MCF 10A (cell line): ENCODE measurements at regions of chr15 and their contacts with region 1.

Region 1: DNA sequence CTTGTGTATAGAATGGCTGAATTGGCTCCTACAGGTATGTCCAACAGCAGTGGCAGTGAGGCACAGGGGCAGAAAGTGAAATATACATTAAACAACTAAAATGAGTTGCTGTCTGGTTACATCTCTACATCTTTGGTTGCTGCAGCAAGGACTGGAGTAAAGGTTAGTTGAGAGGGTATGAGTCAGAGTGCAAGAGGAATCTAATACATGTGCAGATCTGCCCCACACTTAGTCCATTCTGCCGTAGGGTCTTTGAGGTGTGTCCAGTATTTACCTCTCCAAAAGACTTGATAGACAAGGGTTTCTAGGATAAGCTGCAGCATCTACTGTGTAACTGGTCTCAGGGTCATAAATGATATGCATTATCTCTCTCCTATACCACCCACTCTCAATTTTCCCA is 6.2 kb upstream of the NEDD4 start:
- DNase-seq: peak; percentile 80
- H3K4me3 Mint-ChIP-seq: no peak overlapping the region
- H3K27ac Mint-ChIP-seq: peak overlapping the region; percentile 24
- H3K4me1 Mint-ChIP-seq: peaks cover 53% of the 10 kb centered on the region
- H3K27me3 Mint-ChIP-seq: no peaks in the 10 kb centered on the region
- CTCF ChIP-seq: no peak

Region 2: GRCh38 chr15:55907797-55908196 is 91.8 kb before region 1 on chr15:
- CTCF ChIA-PET with region 1: no interaction called
- POLR2A ChIA-PET with region 1: interaction called, 22 read pairs
- intact Hi-C with region 1: no loop called
- DNase-seq: peak; percentile 81
- H3K4me3 Mint-ChIP-seq: no peak overlapping the region
- H3K27ac Mint-ChIP-seq: peak overlapping the region; percentile 89
- H3K4me1 Mint-ChIP-seq: peaks cover 50% of the 10 kb centered on the region
- H3K27me3 Mint-ChIP-seq: no peaks in the 10 kb centered on the region
- CTCF ChIP-seq: no peak

Region 3: DNA sequence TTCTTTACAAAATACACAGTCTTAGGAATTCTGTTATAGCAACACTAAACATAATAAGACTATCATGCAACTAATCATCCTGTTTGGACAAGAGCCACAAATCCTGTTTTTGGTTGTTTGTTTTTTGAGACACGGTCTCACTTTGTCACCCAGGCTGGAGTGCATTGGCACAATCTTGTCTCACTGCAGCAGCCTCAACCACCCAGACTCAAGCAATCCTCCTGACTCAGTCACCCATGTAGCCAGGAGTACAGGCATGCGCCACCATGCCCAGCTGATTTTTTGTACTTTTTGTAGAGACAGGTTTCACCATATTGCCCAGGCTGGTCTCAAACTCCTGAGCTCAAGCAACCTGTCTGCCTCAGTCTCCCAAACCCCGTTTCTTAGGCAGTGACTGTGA is 34.5 kb before region 1 on chr15:
- CTCF ChIA-PET with region 1: no interaction called
- POLR2A ChIA-PET with region 1: no interaction called
- intact Hi-C with region 1: no loop called
- DNase-seq: no peak
- H3K4me3 Mint-ChIP-seq: no peak overlapping the region
- H3K27ac Mint-ChIP-seq: no peak overlapping the region
- H3K4me1 Mint-ChIP-seq: peaks cover 9% of the 10 kb centered on the region
- H3K27me3 Mint-ChIP-seq: no peaks in the 10 kb centered on the region
- CTCF ChIP-seq: no peak

Region 4: GRCh38 chr15:56017920-56018319 is 18.3 kb after region 1 on chr15:
- CTCF ChIA-PET with region 1: interaction called, 5 read pairs
- POLR2A ChIA-PET with region 1: interaction called, 13 read pairs
- intact Hi-C with region 1: no loop called
- DNase-seq: no peak
- H3K4me3 Mint-ChIP-seq: no peak overlapping the region
- H3K27ac Mint-ChIP-seq: peak overlapping the region; percentile 3
- H3K4me1 Mint-ChIP-seq: peaks cover 18% of the 10 kb centered on the region
- H3K27me3 Mint-ChIP-seq: no peaks in the 10 kb centered on the region
- CTCF ChIP-seq: no peak

Region 5: GRCh38 chr15:56028430-56028829 is 28.8 kb after region 1 on chr15:
- CTCF ChIA-PET with region 1: interaction called, 4 read pairs
- POLR2A ChIA-PET with region 1: interaction called, 28 read pairs
- intact Hi-C with region 1: no loop called
- DNase-seq: no peak
- H3K4me3 Mint-ChIP-seq: no peak overlapping the region
- H3K27ac Mint-ChIP-seq: peak overlapping the region; percentile 57
- H3K4me1 Mint-ChIP-seq: peaks cover 8% of the 10 kb centered on the region
- H3K27me3 Mint-ChIP-seq: no peaks in the 10 kb centered on the region
- CTCF ChIP-seq: no peak

Region 6: DNA sequence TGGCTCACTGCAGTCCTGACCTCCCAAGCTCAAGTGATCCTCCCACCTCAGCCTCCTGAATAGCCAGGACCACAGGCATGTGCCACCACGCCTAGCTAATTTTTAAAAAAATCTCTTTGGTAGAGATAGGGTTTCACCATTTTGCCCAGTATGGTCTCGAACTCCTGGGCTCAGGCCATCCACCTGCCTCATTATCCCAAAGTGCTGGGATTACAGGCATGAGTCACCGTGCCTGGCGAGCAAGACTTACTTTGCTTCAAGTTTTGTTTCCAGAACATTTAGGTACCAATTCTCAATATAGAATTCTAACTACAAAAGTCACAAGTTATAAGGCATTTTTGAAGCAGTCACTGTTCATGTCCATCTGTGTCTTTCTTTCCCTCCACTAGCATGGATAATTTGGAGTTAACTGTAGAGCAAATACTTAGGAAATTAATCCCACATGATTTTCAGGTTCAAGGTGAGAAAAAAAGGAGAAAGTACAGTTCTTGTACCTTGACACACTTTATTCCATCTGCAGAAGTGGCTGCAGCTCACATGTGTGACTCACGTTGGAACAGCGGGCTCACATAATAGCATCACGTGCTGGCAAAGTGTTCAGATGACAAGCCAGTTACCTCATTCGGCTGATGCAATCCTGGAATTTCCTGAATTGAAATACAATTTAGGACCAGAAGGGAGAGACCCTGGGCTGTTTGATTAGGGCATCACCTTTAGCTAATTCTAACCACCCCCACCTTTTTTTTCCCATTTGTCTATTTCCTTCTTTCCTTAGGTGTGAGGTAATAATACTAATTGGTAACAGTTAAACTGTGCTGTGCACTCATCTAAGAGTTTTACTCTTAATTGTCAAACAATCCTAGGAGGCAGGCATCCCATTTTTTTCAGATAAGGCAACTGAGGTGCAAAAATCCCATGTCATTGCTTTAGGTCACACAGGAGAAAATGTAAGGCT is 40.7 kb after region 1 on chr15:
- CTCF ChIA-PET with region 1: interaction called, 10 read pairs
- POLR2A ChIA-PET with region 1: interaction called, 213 read pairs
- intact Hi-C with region 1: no loop called
- DNase-seq: peak; percentile 96
- H3K4me3 Mint-ChIP-seq: peak overlapping the region; percentile 42
- H3K27ac Mint-ChIP-seq: peak overlapping the region; percentile 86
- H3K4me1 Mint-ChIP-seq: peaks cover 34% of the 10 kb centered on the region
- H3K27me3 Mint-ChIP-seq: no peaks in the 10 kb centered on the region
- CTCF ChIP-seq: no peak

Region 7: GRCh38 chr15:56076640-56077039 is 77.0 kb after region 1 on chr15:
- CTCF ChIA-PET with region 1: no interaction called
- POLR2A ChIA-PET with region 1: no interaction called
- intact Hi-C with region 1: no loop called
- DNase-seq: no peak
- H3K4me3 Mint-ChIP-seq: no peak overlapping the region
- H3K27ac Mint-ChIP-seq: no peak overlapping the region
- H3K4me1 Mint-ChIP-seq: no peaks in the 10 kb centered on the region
- H3K27me3 Mint-ChIP-seq: no peaks in the 10 kb centered on the region
- CTCF ChIP-seq: no peak